CD4-positive, alpha-beta T cell (primary cell): ENCODE measurements at regions of chr5 and their contacts with region 1.

Region 1: DNA sequence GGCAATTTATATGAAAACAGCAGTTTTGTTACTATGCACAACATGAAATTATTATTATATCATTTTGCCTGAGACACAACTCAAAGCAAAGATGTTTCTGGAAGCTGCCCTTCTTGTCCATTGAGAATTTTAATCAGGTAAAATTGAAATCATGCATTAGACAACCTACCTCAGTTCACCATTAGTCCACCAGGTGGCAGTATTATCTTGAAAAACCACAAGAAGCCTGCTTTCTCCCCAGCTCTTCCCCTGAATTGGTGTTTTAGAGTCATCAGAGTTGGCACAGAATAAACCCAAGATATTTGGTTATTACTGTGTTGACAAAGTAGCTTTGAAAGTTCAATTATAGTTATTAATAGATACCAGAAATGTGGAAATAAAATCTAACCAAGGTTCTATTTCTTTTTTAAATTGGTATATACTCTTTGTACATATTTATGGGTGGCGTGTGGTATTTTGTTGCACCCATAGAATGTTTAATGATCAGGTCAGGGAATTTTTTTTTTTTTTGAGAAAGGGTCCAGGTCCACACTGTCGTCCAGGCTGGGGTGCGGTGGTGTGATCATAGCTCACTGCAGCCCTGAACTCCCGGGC is 25.7 kb downstream of the UTP15 start:
- DNase-seq: peak in 10 of 14 experiments; percentile 9 to 83 (median 40)
- ATAC-seq: peak; percentile 62
- H3K4me3 ChIP-seq: no peak overlapping the region
- H3K4me3 Mint-ChIP-seq: no peak overlapping the region
- H3K27ac ChIP-seq: no peak overlapping the region
- H3K27ac Mint-ChIP-seq: no peak overlapping the region
- H3K4me1 ChIP-seq: no peaks in the 10 kb centered on the region
- H3K4me1 Mint-ChIP-seq: no peaks in the 10 kb centered on the region
- H3K27me3 ChIP-seq: no peaks in the 10 kb centered on the region
- H3K27me3 Mint-ChIP-seq: no peaks in the 10 kb centered on the region
- CTCF ChIP-seq: peak; percentile 92

Region 2: GRCh38 chr5:71974165-71974564 is 1617.0 kb before region 1 on chr5:
- CTCF ChIA-PET with region 1: no interaction called
- POLR2A ChIA-PET with region 1: no interaction called
- intact Hi-C with region 1: no loop called
- DNase-seq: no peak
- ATAC-seq: no peak
- H3K4me3 ChIP-seq: no peak overlapping the region
- H3K4me3 Mint-ChIP-seq: no peak overlapping the region
- H3K27ac ChIP-seq: no peak overlapping the region
- H3K27ac Mint-ChIP-seq: no peak overlapping the region
- H3K4me1 ChIP-seq: no peaks in the 10 kb centered on the region
- H3K4me1 Mint-ChIP-seq: no peaks in the 10 kb centered on the region
- H3K27me3 ChIP-seq: no peaks in the 10 kb centered on the region
- H3K27me3 Mint-ChIP-seq: peaks cover 26% of the 10 kb centered on the region
- CTCF ChIP-seq: no peak

Region 3: GRCh38 chr5:73792687-73793320 is 201.6 kb after region 1 on chr5:
- CTCF ChIA-PET with region 1: interaction called, 13 read pairs
- POLR2A ChIA-PET with region 1: interaction called, 5 read pairs
- intact Hi-C with region 1: loop called (anchors 1 kb)
- DNase-seq: peak; percentile 21 to 75 (median 44)
- ATAC-seq: peak; percentile 57
- H3K4me3 ChIP-seq: no peak overlapping the region
- H3K4me3 Mint-ChIP-seq: no peak overlapping the region
- H3K27ac ChIP-seq: no peak overlapping the region
- H3K27ac Mint-ChIP-seq: no peak overlapping the region
- H3K4me1 ChIP-seq: no peaks in the 10 kb centered on the region
- H3K4me1 Mint-ChIP-seq: no peaks in the 10 kb centered on the region
- H3K27me3 ChIP-seq: no peaks in the 10 kb centered on the region
- H3K27me3 Mint-ChIP-seq: peaks cover 48% of the 10 kb centered on the region
- CTCF ChIP-seq: peak; percentile 91

Region 4: GRCh38 chr5:74648835-74649293 is 1057.7 kb after region 1 on chr5:
- CTCF ChIA-PET with region 1: no interaction called
- POLR2A ChIA-PET with region 1: no interaction called
- intact Hi-C with region 1: loop called (anchors 1 to 2 kb)
- DNase-seq: peak in 6 of 14 experiments; percentile 11 to 76 (median 49)
- ATAC-seq: peak; percentile 83
- H3K4me3 ChIP-seq: no peak overlapping the region
- H3K4me3 Mint-ChIP-seq: no peak overlapping the region
- H3K27ac ChIP-seq: no peak overlapping the region
- H3K27ac Mint-ChIP-seq: no peak overlapping the region
- H3K4me1 ChIP-seq: peaks cover 4% of the 10 kb centered on the region
- H3K4me1 Mint-ChIP-seq: no peaks in the 10 kb centered on the region
- H3K27me3 ChIP-seq: peaks cover 0 to 3% of the 10 kb centered on the region in 2 experiments
- H3K27me3 Mint-ChIP-seq: peaks cover 9% of the 10 kb centered on the region
- CTCF ChIP-seq: peak; percentile 91